CD4-positive, alpha-beta T cell (primary cell): ENCODE measurements at regions of chr4 and their contacts with region 1.

Region 1: GRCh38 chr4:73576381-73576780 is 43.9 kb downstream of the RASSF6 start:
- DNase-seq: no peak
- ATAC-seq: no peak
- H3K4me3 ChIP-seq: no peak overlapping the region
- H3K4me3 Mint-ChIP-seq: no peak overlapping the region
- H3K27ac ChIP-seq: no peak overlapping the region
- H3K27ac Mint-ChIP-seq: no peak overlapping the region
- H3K4me1 ChIP-seq: no peaks in the 10 kb centered on the region
- H3K4me1 Mint-ChIP-seq: no peaks in the 10 kb centered on the region
- H3K27me3 ChIP-seq: no peaks in the 10 kb centered on the region
- H3K27me3 Mint-ChIP-seq: no peaks in the 10 kb centered on the region
- CTCF ChIP-seq: no peak

Region 2: GRCh38 chr4:73533515-73534422 is 42.6 kb before region 1 on chr4:
- CTCF ChIA-PET with region 1: no interaction called
- POLR2A ChIA-PET with region 1: no interaction called
- intact Hi-C with region 1: loop called in 1 of 2 experiments (anchors 2 kb)
- DNase-seq: no peak
- ATAC-seq: no peak
- H3K4me3 ChIP-seq: no peak overlapping the region
- H3K4me3 Mint-ChIP-seq: no peak overlapping the region
- H3K27ac ChIP-seq: no peak overlapping the region
- H3K27ac Mint-ChIP-seq: no peak overlapping the region
- H3K4me1 ChIP-seq: no peaks in the 10 kb centered on the region
- H3K4me1 Mint-ChIP-seq: no peaks in the 10 kb centered on the region
- H3K27me3 ChIP-seq: no peaks in the 10 kb centered on the region
- H3K27me3 Mint-ChIP-seq: peaks cover 3% of the 10 kb centered on the region
- CTCF ChIP-seq: no peak